Activated CD8-positive, alpha-beta T cell treated with anti-CD3 and anti-CD28 coated beads, Interleukin-2, amount 10 ng/mL, durations not matched to agents 7 days and 5 days (primary cell): ENCODE measurements at regions of chr15 and their contacts with region 1.

Region 1: DNA sequence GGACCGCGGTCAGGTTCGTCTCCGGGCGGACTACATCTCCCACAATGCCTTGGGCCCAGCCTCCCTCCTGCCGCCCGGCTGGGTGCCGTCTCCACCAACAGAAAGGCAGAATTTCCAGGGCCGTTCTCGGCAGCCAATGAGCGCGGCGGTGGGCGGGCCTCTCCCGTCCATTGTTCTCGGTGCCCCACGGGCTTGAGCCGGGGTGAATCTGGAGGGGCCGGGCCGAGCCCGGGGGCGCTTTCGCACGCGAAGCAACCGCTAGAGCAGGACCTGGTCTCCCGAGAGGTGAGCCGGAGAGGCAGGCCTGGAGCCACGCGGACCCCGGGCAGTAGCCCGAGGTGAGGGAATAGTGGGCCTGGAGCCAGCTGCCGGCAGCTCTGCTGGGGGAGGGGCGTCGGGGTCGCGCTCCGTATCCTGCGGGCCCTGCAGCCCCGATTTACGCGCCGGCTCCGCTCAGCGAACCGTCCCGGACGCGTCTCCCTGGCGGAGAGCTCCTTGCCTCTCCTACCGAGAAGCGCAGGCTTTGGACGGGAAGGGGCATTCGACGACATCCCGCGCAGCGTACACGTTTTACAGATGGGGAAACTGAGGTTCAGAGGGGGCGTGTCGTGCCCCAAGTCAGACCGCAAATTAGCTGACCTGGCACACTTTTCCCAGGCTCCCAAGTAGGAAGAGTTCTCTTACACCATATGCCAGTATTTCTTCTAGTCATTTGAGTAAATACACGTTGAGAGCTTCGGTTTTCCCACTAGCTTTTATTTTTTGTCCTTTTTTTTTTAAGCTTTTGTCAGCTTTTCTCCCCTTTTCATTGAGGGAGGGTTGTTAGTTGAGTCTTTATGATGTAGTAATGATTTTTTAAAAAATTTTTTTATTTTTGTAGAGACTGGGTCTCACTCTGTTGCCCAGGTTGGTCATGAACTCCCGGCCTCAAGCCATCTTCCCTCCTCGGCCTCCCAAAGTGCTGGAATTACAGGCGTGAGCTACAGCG is at the start of gene ZSCAN2:
- DNase-seq: peak; percentile 97
- ATAC-seq: peak; percentile 97
- H3K4me3 Mint-ChIP-seq: peak within 1 kb of the TSS; percentile 95
- H3K27ac Mint-ChIP-seq: peak within 1 kb of the TSS; percentile 70
- H3K4me1 Mint-ChIP-seq: peaks cover 68% of the 10 kb centered on the region
- H3K27me3 Mint-ChIP-seq: no peaks in the 10 kb centered on the region
- total RNA-seq, gene ZSCAN2: 6.5 to 6.7 TPM

Region 2: GRCh38 chr15:84588053-84588874 is 12.9 kb before region 1 on chr15:
- CTCF ChIA-PET with region 1: interaction called, 52 read pairs
- POLR2A ChIA-PET with region 1: no interaction called
- DNase-seq: peak; percentile 91
- ATAC-seq: peak; percentile 100
- H3K4me3 Mint-ChIP-seq: peak overlapping the region; percentile 59
- H3K27ac Mint-ChIP-seq: no peak overlapping the region
- H3K4me1 Mint-ChIP-seq: peaks cover 5% of the 10 kb centered on the region
- H3K27me3 Mint-ChIP-seq: peaks cover 14% of the 10 kb centered on the region

Region 3: DNA sequence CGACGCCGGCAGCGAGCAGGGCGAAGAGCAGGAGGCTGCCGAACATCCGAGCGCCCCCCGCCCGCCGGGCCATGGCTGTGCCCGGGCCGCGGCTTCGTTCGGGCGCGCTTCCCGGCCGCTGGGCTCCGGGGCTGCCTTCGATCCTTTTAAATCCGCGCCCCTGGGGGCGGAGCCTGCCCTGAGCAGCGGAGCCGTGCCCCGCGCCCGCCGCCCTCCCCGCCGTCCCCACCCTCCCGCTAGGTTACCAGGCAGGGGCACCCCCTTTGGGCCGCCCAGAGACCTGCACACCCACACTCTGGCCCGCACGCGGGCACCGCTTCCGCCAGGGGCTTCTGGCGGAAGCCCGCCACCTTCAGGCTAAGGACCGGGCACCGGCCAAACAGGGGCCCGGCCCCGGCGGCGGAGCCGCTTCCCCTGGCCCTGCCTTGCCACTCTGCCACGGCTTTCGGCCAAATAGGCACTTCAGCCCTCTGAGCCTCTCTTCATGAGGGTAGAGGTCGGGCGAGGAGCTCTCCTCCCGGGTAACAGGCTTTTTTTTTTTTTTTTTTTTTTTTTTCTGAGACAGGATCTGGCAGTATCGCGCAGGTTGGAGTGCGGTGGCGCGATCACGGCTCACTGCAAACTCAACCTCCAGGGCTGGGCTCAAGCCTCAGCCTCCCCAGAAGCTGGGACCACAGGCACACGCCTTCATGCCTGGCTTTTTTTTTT is 57.1 kb after region 1 on chr15 and contains the start of gene NMB:
- CTCF ChIA-PET with region 1: interaction called, 30 read pairs
- POLR2A ChIA-PET with region 1: interaction called, 6 read pairs
- DNase-seq: peak; percentile 85
- ATAC-seq: peak; percentile 72
- H3K4me3 Mint-ChIP-seq: peak within 1 kb of the TSS; percentile 69
- H3K27ac Mint-ChIP-seq: peak within 1 kb of the TSS; percentile 80
- H3K4me1 Mint-ChIP-seq: peaks cover 40% of the 10 kb centered on the region
- H3K27me3 Mint-ChIP-seq: no peaks in the 10 kb centered on the region
- total RNA-seq, gene NMB: 3.3 to 4.1 TPM

Region 4: DNA sequence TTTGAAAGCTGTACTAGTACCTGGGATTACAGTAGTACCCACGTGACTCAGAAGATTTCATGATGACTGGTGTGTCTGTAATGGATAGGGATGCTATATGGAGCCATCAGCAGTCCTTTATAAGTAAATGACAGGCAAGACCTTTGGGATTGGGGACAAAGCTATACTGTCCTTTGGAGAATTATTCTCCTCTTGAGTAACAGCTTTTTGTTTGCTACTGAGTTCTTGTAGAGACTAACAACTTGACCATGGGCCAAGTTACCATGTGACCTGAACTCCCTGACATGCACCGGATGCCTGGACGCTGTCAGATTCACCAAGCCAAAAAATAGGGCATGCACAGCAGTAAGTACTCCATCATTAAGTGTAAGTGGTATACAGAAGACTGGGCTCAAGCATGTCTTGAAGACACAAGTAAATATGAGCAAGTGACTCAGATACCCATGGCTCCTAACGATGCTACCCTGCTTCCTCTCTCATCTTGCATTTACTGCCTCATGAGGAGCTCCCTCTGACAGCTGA is 101.9 kb after region 1 on chr15:
- CTCF ChIA-PET with region 1: no interaction called
- POLR2A ChIA-PET with region 1: no interaction called
- DNase-seq: no peak
- ATAC-seq: no peak
- H3K4me3 Mint-ChIP-seq: no peak overlapping the region
- H3K27ac Mint-ChIP-seq: no peak overlapping the region
- H3K4me1 Mint-ChIP-seq: peaks cover 27% of the 10 kb centered on the region
- H3K27me3 Mint-ChIP-seq: no peaks in the 10 kb centered on the region

Region 5: DNA sequence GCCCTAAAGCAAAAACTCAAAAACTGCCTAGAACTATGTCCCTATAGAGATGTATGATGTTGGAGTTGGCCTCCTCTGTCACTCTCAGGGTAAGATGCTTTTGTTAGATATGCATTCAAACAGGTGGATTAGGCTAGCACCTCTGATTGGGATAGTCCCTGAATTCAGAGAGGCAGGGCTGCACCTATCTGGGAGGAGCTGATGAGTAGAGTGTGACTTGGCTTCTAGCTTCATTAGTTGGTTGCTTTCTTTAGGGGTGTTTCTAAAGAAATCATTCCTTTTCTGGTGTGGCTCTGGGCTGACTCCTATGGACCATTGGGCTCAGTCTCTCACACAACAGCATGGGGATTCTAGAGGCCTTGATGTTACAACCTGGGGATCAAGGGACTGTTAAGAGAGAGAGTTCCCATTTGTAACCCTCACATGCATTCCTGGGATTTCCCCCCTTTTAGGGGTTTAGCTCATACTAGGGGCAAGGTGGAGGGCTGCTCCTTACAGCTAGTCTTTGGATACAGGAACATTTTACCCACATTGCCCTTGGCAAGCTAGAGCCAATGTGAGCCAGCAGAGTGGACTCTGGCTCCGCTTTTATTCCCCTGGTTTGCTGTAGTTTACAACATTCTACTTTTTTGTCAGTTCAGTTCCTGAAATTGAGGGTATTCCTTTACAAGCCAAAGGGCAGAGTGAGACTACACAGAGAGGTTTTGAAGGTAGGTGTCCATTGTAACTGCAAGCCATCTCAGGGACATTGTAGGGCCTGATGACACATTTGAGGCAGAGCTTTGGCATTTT is 154.8 kb after region 1 on chr15:
- CTCF ChIA-PET with region 1: no interaction called
- POLR2A ChIA-PET with region 1: no interaction called
- DNase-seq: no peak
- ATAC-seq: no peak
- H3K4me3 Mint-ChIP-seq: no peak overlapping the region
- H3K27ac Mint-ChIP-seq: no peak overlapping the region
- H3K4me1 Mint-ChIP-seq: peaks cover 27% of the 10 kb centered on the region
- H3K27me3 Mint-ChIP-seq: no peaks in the 10 kb centered on the region

Region 6: DNA sequence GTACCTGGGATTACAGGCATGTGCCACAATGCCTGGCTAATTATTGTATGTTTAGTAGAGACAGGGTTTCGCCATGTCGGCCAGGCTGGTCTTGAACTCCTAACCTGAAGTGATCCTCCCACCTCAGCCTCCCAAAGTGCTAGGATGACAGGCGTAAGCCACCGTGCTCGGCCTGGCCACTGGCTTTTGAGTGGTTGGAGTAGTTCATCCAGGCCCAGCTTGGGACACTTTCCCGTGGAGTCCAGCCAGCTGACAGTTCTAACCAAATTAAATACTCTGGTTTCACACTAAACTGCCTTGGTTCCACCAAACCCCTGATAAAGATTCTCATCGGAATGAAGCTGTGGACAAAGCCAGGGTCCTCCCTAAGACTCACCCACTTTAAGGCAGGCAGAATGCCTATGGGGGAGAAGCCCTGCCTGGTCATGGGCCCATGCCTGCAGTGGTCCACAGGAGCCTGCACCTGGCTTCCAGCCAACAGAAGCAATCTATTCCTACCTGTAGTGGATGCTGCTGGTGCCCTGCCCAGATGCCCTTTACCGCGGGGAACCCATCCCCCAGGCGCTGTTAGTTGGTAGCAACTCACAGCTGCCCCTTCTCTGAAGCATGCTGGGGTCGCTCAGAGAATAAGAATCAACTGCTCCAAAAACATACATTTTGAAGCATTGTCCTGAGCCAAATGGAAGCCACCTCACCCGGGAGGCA is 278.1 kb after region 1 on chr15:
- CTCF ChIA-PET with region 1: interaction called, 24 read pairs
- POLR2A ChIA-PET with region 1: no interaction called
- DNase-seq: no peak
- ATAC-seq: no peak
- H3K4me3 Mint-ChIP-seq: no peak overlapping the region
- H3K27ac Mint-ChIP-seq: no peak overlapping the region
- H3K4me1 Mint-ChIP-seq: peaks cover 2% of the 10 kb centered on the region
- H3K27me3 Mint-ChIP-seq: peaks cover 3% of the 10 kb centered on the region